Naive thymus-derived CD4-positive, alpha-beta T cell (primary cell): ENCODE measurements at regions of chr11 and their contacts with region 1.

Region 1: DNA sequence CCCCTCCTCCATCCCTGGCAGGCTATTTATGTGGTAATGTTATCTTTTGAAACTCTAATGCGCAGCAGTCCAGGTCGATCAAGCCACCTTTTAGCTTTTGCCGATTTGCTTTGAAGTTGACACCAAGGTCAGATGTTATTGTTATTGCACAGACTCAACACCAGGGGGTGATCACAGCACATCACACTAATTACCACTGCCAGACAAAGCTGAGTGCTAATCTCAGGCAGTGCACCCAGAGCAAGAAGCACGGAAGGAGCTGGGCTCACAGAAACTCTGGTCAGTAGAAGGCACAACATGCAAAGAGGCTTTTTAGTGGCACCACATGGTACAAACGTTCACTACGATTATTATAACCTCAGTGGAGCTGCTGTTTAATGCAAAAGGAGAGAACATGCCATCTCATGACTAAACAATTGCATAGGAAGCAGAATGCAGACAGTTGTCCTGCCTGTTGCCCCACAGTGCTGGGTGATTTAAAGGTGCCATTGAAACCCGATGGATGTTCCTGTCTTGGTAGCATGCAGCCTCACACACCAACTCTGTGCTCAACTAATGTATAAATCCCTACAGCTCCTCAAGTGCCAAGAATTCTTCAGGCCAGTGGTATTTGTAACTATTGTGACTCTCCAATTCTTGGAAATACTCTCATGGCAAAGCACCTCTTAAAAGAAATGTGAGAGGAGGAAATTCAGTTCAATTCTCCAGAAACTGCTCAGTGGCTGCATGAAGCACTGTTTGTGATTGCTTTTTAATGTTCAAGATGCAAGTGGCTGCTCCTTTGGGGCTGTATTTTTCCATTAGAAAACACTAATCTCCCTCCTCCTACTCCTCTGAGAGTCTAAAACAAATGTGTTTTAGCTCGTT is 353.9 kb upstream of the DDI1 start:
- DNase-seq: peak; percentile 13 to 70 (median 47)
- ATAC-seq: peak; percentile 90
- H3K4me3 ChIP-seq: no peak overlapping the region
- H3K4me3 Mint-ChIP-seq: peak overlapping the region in 4 of 10 donors; percentile 1 to 48 (median 16)
- H3K27ac ChIP-seq: no peak overlapping the region
- H3K27ac Mint-ChIP-seq: peak overlapping the region in 1 of 9 donors; percentile 2
- H3K4me1 ChIP-seq: no peaks in the 10 kb centered on the region
- H3K4me1 Mint-ChIP-seq: peaks cover 0 to 9% (median 5%) of the 10 kb centered on the region in 7 donors
- H3K27me3 ChIP-seq: no peaks in the 10 kb centered on the region
- H3K27me3 Mint-ChIP-seq: peaks cover 0 to 6% (median 2%) of the 10 kb centered on the region in 5 donors

Region 2: DNA sequence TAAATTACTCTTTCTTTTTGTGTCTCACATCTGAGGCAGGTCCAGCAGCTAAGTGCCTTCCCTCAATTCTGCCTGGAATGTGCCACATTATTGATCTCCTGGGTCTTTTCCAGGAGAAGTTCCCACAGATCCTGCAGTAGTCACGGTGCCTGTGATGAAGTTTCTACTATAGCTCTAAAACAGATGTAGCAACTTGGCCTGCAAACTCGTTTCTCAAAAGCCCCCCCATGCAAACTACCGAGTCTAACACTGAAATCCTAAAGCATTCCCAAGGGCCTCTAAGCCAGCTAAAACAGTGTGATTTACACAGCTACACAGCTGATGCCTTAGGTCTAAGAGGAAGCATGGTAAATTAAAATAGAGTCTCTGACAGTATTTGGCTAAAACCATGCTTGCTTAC is 408.2 kb after region 1 on chr11:
- CTCF ChIA-PET with region 1: no interaction called
- POLR2A ChIA-PET with region 1: no interaction called
- intact Hi-C with region 1: no loop called
- DNase-seq: no peak
- ATAC-seq: no peak
- H3K4me3 ChIP-seq: no peak overlapping the region
- H3K4me3 Mint-ChIP-seq: no peak overlapping the region
- H3K27ac ChIP-seq: no peak overlapping the region
- H3K27ac Mint-ChIP-seq: no peak overlapping the region
- H3K4me1 ChIP-seq: no peaks in the 10 kb centered on the region
- H3K4me1 Mint-ChIP-seq: no peaks in the 10 kb centered on the region
- H3K27me3 ChIP-seq: no peaks in the 10 kb centered on the region
- H3K27me3 Mint-ChIP-seq: no peaks in the 10 kb centered on the region

Region 3: GRCh38 chr11:104151404-104152204 is 469.1 kb after region 1 on chr11:
- CTCF ChIA-PET with region 1: no interaction called
- POLR2A ChIA-PET with region 1: no interaction called
- intact Hi-C with region 1: loop called in 1 of 2 experiments (anchors 1 kb)
- DNase-seq: no peak
- ATAC-seq: no peak
- H3K4me3 ChIP-seq: no peak overlapping the region
- H3K4me3 Mint-ChIP-seq: no peak overlapping the region
- H3K27ac ChIP-seq: no peak overlapping the region
- H3K27ac Mint-ChIP-seq: no peak overlapping the region
- H3K4me1 ChIP-seq: no peaks in the 10 kb centered on the region
- H3K4me1 Mint-ChIP-seq: peaks cover 0 to 7% (median 0%) of the 10 kb centered on the region in 7 donors
- H3K27me3 ChIP-seq: no peaks in the 10 kb centered on the region
- H3K27me3 Mint-ChIP-seq: no peaks in the 10 kb centered on the region

Region 4: GRCh38 chr11:104333977-104334376 is 651.4 kb after region 1 on chr11:
- CTCF ChIA-PET with region 1: no interaction called
- POLR2A ChIA-PET with region 1: no interaction called
- intact Hi-C with region 1: loop called in 1 of 2 experiments (anchors 2 kb)
- DNase-seq: no peak
- ATAC-seq: no peak
- H3K4me3 ChIP-seq: no peak overlapping the region
- H3K4me3 Mint-ChIP-seq: no peak overlapping the region
- H3K27ac ChIP-seq: no peak overlapping the region
- H3K27ac Mint-ChIP-seq: no peak overlapping the region
- H3K4me1 ChIP-seq: no peaks in the 10 kb centered on the region
- H3K4me1 Mint-ChIP-seq: no peaks in the 10 kb centered on the region
- H3K27me3 ChIP-seq: no peaks in the 10 kb centered on the region
- H3K27me3 Mint-ChIP-seq: peaks cover 0 to 10% (median 0%) of the 10 kb centered on the region in 5 donors